Activated CD4-positive, alpha-beta T cell treated with anti-CD3 and anti-CD28 coated beads for 36 hours (primary cell): ENCODE measurements at regions of chr11 and their contacts with region 1.

Region 1: GRCh38 chr11:77547863-77548551 is 41.7 kb upstream of the AQP11 start:
- DNase-seq: peak; percentile 40
- ATAC-seq: no peak
- H3K4me3 Mint-ChIP-seq: no peak overlapping the region
- H3K27ac Mint-ChIP-seq: no peak overlapping the region
- H3K4me1 Mint-ChIP-seq: peaks cover 2% of the 10 kb centered on the region
- H3K27me3 Mint-ChIP-seq: no peaks in the 10 kb centered on the region

Region 2: DNA sequence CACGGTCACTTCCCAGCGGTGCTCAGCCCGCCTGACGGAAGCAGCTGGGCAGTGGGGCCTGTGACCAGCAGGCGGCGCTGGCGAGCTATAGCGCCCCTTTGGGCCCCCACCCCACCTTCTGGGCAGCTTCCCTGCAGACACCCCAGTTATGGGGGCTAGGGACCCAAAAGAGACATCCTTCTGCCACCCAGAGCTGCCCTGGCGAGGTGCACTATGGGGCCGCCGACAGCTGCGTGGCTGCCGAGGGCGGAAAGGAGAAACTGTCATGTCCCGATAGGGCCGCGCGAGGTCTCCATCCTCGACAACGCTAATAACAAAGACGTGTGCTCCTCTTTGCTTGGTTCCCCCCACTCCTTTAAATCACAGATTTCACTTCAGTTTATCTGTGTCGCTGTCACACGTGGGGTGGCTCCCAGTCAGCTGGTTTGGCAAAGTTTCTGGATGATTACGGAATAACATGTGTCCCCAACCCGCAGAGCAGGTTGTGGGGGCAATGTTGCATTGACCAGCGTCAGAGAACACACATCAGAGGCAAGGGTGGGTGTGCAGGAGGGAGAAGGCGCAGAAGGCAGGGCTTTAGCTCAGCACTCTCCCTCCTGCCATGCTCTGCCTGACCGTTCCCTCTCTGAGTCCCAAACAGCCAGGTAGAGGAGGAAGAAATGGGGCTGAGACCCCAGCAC is 420.6 kb before region 1 on chr11:
- CTCF ChIA-PET with region 1: interaction called, 18 read pairs
- POLR2A ChIA-PET with region 1: no interaction called
- intact Hi-C with region 1: loop called (anchors 1 kb)
- DNase-seq: peak; percentile 75
- ATAC-seq: peak; percentile 89
- H3K4me3 Mint-ChIP-seq: peak overlapping the region; percentile 39
- H3K27ac Mint-ChIP-seq: peak overlapping the region; percentile 25
- H3K4me1 Mint-ChIP-seq: peaks cover 5% of the 10 kb centered on the region
- H3K27me3 Mint-ChIP-seq: peaks cover 3% of the 10 kb centered on the region

Region 3: GRCh38 chr11:77187776-77188632 is 360.0 kb before region 1 on chr11:
- CTCF ChIA-PET with region 1: interaction called, 6 read pairs
- POLR2A ChIA-PET with region 1: no interaction called
- intact Hi-C with region 1: loop called (anchors 1 to 2 kb)
- DNase-seq: peak; percentile 86
- ATAC-seq: peak; percentile 71
- H3K4me3 Mint-ChIP-seq: no peak overlapping the region
- H3K27ac Mint-ChIP-seq: no peak overlapping the region
- H3K4me1 Mint-ChIP-seq: peaks cover 3% of the 10 kb centered on the region
- H3K27me3 Mint-ChIP-seq: no peaks in the 10 kb centered on the region

Region 4: GRCh38 chr11:77195171-77195751 is 352.7 kb before region 1 on chr11:
- CTCF ChIA-PET with region 1: interaction called, 15 read pairs
- POLR2A ChIA-PET with region 1: no interaction called
- intact Hi-C with region 1: loop called (anchors 1 to 2 kb)
- DNase-seq: no peak
- ATAC-seq: no peak
- H3K4me3 Mint-ChIP-seq: no peak overlapping the region
- H3K27ac Mint-ChIP-seq: no peak overlapping the region
- H3K4me1 Mint-ChIP-seq: no peaks in the 10 kb centered on the region
- H3K27me3 Mint-ChIP-seq: no peaks in the 10 kb centered on the region

Region 5: GRCh38 chr11:77473801-77474683 is 74.0 kb before region 1 on chr11 and contains the start of gene PAK1:
- CTCF ChIA-PET with region 1: interaction called, 3 read pairs
- POLR2A ChIA-PET with region 1: no interaction called
- intact Hi-C with region 1: loop called in 1 of 2 experiments (anchors 1 kb)
- DNase-seq: peak; percentile 94
- ATAC-seq: peak; percentile 75
- H3K4me3 Mint-ChIP-seq: peak within 1 kb of the TSS; percentile 75
- H3K27ac Mint-ChIP-seq: peak within 1 kb of the TSS; percentile 77
- H3K4me1 Mint-ChIP-seq: peaks cover 4% of the 10 kb centered on the region
- H3K27me3 Mint-ChIP-seq: peaks cover 15% of the 10 kb centered on the region
- total RNA-seq, gene PAK1: 38.2 to 43.9 TPM